ENCODE measurements at regions of chr19 and their contacts with region 1.

Region 1: GRCh38 chr19:53195265-53195903 is 2.2 kb upstream of the ZNF665 start:
- DNase-seq: peak; percentile 53 to 83
- ATAC-seq: peak in 7 of 8 donors; percentile 30 to 69 (median 56)
- H3K4me3 ChIP-seq: no peak overlapping the region
- H3K27ac ChIP-seq: no peak overlapping the region
- H3K4me1 ChIP-seq: peaks cover 3 to 31% (median 14%) of the 10 kb centered on the region in 9 donors
- H3K27me3 ChIP-seq: no peaks in the 10 kb centered on the region
- CTCF ChIP-seq: peak; percentile 82 to 97 (median 88)

Region 2: DNA sequence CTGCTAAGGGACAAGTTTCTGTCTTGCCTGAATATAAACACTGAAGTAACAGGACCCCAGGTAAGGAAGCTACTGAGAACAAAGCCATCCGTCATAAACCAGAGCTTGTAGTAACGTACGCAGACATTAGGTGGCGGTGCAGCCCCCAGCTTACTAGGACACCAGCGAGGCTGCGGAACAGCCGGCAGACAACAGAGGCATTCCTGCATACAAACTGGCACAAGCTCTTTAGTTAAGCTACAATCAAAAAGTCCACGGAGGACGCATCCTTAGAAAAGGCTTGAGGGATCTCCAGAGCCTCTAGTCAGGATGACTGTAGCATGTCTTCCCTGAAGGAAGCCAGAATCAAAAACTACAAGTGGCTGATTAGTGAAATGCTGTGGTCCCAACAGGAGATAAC is 118.4 kb before region 1 on chr19:
- intact Hi-C with region 1: loop called in 8 of 10 experiments (anchors 5 to 10 kb)
- DNase-seq: peak; percentile 55 to 63
- ATAC-seq: peak in 7 of 8 donors; percentile 32 to 84 (median 76)
- H3K4me3 ChIP-seq: no peak overlapping the region
- H3K27ac ChIP-seq: peak overlapping the region in 4 of 10 donors; percentile 34 to 72 (median 62)
- H3K4me1 ChIP-seq: peaks cover 0 to 38% (median 4%) of the 10 kb centered on the region in 9 donors
- H3K27me3 ChIP-seq: no peaks in the 10 kb centered on the region
- CTCF ChIP-seq: peak; percentile 63 to 85 (median 78)

Region 3: GRCh38 chr19:53103198-53103944 is 92.0 kb before region 1 on chr19 and contains the start of gene ZNF160:
- intact Hi-C with region 1: no loop called
- DNase-seq: peak; percentile 100
- ATAC-seq: peak; percentile 99
- H3K4me3 ChIP-seq: peak within 1 kb of the TSS; percentile 75 to 97 (median 85)
- H3K27ac ChIP-seq: peak within 1 kb of the TSS; percentile 84 to 98 (median 94)
- H3K4me1 ChIP-seq: peaks cover 9 to 46% (median 25%) of the 10 kb centered on the region in 9 donors
- H3K27me3 ChIP-seq: no peaks in the 10 kb centered on the region
- CTCF ChIP-seq: no peak
- total RNA-seq, gene ZNF160: 9.8 to 22.9 (median 18.5) TPM

Region 4: DNA sequence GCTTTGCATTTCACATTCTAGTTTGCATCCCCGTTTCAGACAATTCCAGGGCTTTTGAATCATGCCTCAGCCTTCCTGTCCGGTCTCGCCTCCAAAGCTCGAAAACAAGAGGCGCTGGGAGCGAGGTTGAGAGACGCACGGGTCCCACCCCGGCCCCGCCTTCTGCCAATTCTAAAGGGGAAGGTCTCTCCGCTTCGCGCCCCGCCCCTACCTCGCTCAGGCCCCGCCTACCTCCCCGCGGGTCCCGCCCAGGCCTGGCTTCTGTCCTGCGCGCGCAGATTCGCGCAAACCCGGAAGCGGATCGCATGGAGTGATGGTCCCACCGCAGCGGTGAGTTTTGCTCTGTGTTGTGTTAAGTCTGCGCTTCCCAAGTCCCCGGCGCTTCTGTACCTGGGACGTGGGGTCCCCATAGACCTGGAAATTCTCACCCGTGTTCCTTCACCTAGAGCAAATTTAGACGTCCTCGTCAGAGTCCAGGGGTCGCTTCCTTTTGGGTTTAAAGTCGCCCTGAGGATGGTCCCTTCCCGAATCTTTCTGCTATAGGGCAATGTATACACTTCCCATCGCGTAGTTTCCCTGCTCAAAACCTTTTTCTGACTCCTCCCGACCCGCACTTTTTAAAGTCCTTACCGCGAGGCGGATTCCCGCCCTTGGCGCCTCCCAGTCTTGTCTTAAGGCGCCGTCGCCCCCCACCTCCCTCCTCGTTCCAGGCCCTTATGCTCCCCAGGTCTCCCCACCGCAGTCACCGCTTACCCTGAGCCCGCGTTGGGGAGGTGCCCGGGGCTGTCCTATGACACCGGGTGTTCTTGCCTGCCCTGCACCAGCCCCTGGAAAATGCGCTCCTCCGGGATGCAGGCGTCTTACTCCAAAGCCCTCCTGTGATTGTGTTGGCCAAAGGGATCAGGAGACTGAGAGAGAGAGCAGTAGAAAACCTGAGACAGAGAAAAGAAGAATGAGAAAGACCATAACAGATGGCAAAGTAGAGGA is 138.4 kb after region 1 on chr19 and contains the start of gene ZNF845:
- intact Hi-C with region 1: loop called in 1 of 10 experiments (anchors 10 kb)
- DNase-seq: peak; percentile 92 to 96
- ATAC-seq: peak; percentile 99 to 100 (median 100)
- H3K4me3 ChIP-seq: peak within 1 kb of the TSS; percentile 58 to 90 (median 72)
- H3K27ac ChIP-seq: peak within 1 kb of the TSS; percentile 43 to 83 (median 76)
- H3K4me1 ChIP-seq: peaks cover 2 to 15% (median 8%) of the 10 kb centered on the region in 9 donors
- H3K27me3 ChIP-seq: peaks cover 0 to 5% (median 0%) of the 10 kb centered on the region in 7 donors
- CTCF ChIP-seq: no peak
- total RNA-seq, gene ZNF845: 2.7 to 4.9 (median 3.8) TPM

Region 5: DNA sequence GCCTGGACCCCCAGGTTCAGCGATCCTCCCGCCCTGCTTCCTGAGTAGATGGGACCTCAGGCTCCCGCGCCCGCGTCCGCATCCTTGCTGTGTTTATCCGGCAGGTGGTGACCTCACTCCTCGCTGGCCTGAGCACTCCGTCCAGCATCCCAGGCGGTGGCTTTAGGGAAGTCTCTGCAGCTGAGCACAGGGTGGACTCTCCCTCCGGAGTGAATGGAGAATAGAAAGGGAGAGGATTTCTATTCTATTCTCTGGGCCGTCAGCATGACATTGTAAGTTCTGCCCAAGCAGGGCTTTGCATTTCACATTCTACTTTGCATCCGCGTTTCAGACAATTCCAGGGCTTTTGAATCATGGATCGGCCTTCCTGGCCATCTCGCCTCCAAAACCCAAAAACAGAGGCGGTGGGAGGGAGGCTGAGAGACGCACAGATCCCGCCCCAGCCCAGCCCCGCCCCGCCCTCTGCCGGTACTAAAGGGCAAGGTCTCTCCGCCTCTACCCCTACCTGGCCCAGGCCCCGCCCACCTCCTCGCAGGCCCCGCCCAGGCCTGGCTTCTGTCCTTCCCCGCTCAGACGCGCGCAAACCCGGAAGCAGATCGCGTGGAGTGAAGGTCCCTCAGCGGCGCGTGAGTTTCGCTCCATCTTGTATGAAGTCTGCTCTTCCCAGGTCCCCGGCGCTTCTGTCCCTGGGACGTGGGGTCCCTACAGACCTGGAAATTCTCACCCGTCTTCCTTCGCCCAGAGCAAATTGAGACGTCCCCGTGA is 169.9 kb after region 1 on chr19 and contains the start of gene ZNF525:
- intact Hi-C with region 1: loop called in 5 of 10 experiments (anchors 5 to 10 kb)
- DNase-seq: peak; percentile 81 to 91
- ATAC-seq: peak; percentile 98 to 100 (median 99)
- H3K4me3 ChIP-seq: peak within 1 kb of the TSS; percentile 49 to 92 (median 72)
- H3K27ac ChIP-seq: peak within 1 kb of the TSS in 9 of 10 donors; percentile 11 to 78 (median 53)
- H3K4me1 ChIP-seq: peaks cover 0 to 14% (median 6%) of the 10 kb centered on the region in 9 donors
- H3K27me3 ChIP-seq: no peaks in the 10 kb centered on the region
- CTCF ChIP-seq: peak in 7 of 9 donors; percentile 7 to 38 (median 27)
- total RNA-seq, gene ZNF525: 2.1 to 4.8 (median 3.7) TPM

Region 6: DNA sequence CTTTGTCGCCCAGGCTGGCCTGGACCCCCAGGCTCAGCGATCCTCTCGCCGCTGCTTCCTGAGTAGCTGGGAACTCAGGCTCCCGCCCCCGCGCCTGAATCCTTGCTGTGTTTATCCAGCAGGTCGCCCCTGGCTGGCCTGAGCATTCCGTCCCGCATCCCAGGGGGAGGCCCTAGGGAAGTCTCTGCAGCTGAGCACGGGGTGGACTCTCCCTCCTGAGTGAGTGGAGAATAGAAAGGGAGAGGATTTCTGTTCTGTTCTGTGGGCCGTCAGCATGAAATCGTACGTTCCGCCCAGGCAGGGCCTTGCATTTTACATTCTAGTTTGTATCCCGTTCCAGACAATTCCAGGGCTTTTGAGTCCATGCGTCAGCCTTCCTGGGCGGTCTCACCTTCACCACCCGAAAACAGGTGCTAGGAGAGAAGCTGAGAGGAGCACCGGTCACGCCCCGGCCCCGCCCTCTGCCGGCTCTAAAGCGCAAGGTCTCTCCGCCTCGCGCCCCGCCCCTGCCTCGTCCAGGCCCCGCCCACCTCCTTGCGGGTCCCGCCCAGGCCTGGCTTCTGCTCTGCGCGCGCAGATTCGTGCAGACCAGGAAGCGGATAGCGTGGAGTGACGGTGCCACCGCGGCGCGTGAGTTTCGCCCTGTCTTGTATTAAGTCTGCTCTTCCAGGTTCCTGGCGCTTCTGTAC is 236.2 kb after region 1 on chr19 and contains the start of gene ZNF761:
- intact Hi-C with region 1: loop called in 1 of 10 experiments (anchors 10 kb)
- DNase-seq: peak; percentile 92 to 97
- ATAC-seq: peak; percentile 100
- H3K4me3 ChIP-seq: peak within 1 kb of the TSS; percentile 58 to 97 (median 77)
- H3K27ac ChIP-seq: peak within 1 kb of the TSS in 9 of 10 donors; percentile 60 to 87 (median 74)
- H3K4me1 ChIP-seq: peaks cover 0 to 18% (median 7%) of the 10 kb centered on the region in 9 donors
- H3K27me3 ChIP-seq: no peaks in the 10 kb centered on the region
- CTCF ChIP-seq: peak in 8 of 9 donors; percentile 40 to 68 (median 60)
- total RNA-seq, gene ZNF761: 2.4 to 4.2 (median 3.4) TPM

Region 7: DNA sequence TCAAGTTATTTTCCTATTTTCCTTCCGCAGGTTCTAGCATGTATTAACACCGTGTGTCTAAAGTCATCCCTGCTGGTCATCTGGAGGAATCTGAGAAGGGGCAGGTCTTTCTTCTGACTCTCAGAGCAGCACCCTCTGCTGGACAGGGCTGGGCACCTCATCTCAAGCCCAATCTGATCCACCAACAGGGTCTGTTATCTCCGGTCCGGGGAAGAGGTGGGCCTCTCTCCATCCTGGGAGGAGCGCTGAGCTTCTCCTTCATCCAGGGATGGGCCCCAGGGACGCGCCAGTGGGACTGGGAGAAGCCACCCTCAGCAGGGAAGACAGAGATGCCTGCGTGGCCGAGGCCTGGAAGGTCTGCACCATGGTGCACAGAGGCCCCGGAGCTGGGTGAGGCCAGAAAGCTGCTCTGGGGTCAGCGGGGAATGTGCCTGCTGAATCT is 316.6 kb after region 1 on chr19:
- intact Hi-C with region 1: loop called in 6 of 10 experiments (anchors 5 to 10 kb)
- DNase-seq: peak; percentile 45 to 51
- ATAC-seq: peak; percentile 38 to 87 (median 77)
- H3K4me3 ChIP-seq: no peak overlapping the region
- H3K27ac ChIP-seq: no peak overlapping the region
- H3K4me1 ChIP-seq: peaks cover 0 to 5% (median 0%) of the 10 kb centered on the region in 9 donors
- H3K27me3 ChIP-seq: peaks cover 0 to 18% (median 0%) of the 10 kb centered on the region in 7 donors
- CTCF ChIP-seq: peak; percentile 40 to 79 (median 72)